ENCODE measurements at regions of chr5 and their contacts with region 1.

Region 1: DNA sequence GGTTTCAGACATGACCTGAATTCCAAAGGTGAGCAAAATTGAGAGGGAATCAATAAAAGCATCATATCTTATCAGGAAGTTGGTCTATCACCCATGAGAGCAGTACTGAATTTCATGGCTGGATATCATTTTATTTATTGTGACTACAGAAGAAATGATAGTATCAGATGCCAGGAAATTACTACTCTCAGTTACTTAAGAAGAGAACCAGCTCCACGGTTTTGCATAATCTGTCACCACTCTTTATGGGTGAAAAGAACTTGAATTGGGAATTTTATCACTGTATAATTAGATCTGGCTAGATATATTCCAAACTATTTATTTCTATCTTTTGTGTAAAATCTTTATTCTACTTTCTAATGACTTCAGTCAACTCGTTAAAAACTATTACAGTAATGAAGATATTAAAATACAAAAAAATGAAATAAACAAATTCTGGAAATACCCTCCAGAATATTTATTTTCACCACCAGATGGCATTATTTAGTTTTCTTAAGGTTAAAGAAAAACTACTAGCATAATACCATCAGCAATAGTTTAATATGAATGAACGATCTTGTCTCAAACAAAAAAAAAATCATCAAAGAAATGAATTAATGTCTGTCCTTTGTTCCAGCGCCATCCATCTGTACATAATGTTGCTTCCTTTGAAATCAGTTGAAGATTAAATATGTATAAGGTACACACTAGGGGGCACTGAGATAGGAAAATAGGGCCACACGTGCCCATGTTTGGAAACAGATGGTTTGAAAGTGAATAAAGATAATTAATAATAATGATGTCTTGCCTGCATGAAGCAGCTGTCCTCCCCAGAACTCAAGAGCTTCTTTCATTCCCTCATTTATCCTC is 84.7 kb upstream of the SLCO6A1 start:
- DNase-seq: peak in 3 of 4 experiments; percentile 2 to 9 (median 7)
- ATAC-seq: no peak
- H3K4me3 ChIP-seq: no peak overlapping the region
- H3K27ac ChIP-seq: no peak overlapping the region
- H3K4me1 ChIP-seq: no peaks in the 10 kb centered on the region
- H3K27me3 ChIP-seq: no peaks in the 10 kb centered on the region
- CTCF ChIP-seq: peak; percentile 21 to 48 (median 48); a peak in 3 of 6 replicates
- EP300 ChIP-seq: no peak
- POLR2A ChIP-seq: no peak
- RAD21 ChIP-seq: peak; percentile 48 to 61

Region 2: DNA sequence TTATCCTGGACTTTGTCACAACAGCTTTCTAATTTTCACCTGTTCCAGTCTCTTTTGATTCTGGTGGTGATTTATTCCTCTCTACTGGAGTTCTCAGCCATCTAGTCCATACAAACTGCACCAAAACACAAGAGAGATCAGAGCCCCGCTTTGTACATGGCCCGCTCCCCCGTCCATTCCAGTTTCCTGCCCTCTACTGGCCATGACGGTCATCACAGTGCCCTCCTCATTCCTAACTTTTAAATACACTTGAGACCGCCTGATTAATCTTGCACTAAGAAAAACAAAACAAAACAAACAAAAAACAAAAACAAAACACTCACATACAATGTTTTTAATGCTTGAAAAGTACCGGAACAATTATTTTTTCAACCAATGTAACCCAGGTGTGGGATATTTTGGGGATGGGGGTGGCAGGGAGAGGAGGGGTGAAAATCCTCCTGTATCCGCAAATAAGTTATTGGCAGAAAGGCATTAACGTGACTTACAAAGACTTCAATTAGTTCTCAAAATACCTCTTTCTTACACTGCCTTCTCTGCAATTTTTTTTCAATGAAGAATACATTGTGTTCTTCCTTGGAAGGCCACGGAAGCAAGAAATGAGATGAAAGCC is 86.8 kb after region 1 on chr5:
- CTCF ChIA-PET with region 1: no interaction called
- POLR2A ChIA-PET with region 1: no interaction called
- in situ Hi-C with region 1: no loop called
- intact Hi-C with region 1: loop called (anchors 5 kb)
- DNase-seq: peak; percentile 66 to 76 (median 70)
- ATAC-seq: peak; percentile 100
- H3K4me3 ChIP-seq: peak overlapping the region; percentile 37
- H3K27ac ChIP-seq: peak overlapping the region; percentile 74
- H3K4me1 ChIP-seq: no peaks in the 10 kb centered on the region; a peak in 1 of 5 replicates
- H3K27me3 ChIP-seq: no peaks in the 10 kb centered on the region
- CTCF ChIP-seq: peak; percentile 60 to 78 (median 78)
- EP300 ChIP-seq: no peak
- POLR2A ChIP-seq: no peak
- RAD21 ChIP-seq: peak; percentile 43 to 47; a peak in 3 of 4 replicates

Measured in K562 (cell line).